ENCODE measurements at regions of chr10 and their contacts with region 1.

Region 1: DNA sequence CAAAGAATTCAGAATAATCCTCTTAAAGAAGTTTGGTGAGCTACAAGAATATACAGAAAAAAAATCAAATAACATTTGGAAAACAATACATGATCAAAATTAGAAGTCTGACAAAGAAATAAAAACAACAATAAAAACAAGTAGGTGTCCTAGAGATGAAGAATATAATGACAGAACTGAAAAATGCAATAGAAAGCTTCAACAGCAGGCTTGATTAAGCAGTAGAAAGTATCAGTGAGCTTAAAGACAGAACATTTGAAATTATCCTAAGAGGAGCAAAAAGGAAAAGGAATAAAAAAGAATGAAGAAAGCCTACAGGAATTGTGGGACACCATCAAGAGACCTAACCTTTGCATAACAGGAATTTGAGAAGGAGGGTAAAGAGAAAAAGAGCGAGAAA is 238.8 kb downstream of the ZEB1 start:
- DNase-seq: no peak
- H3K4me3 ChIP-seq: no peak overlapping the region
- H3K27ac ChIP-seq: no peak overlapping the region
- H3K4me1 ChIP-seq: no peaks in the 10 kb centered on the region
- H3K27me3 ChIP-seq: no peaks in the 10 kb centered on the region
- CTCF ChIP-seq: no peak
- EP300 ChIP-seq: no peak
- POLR2A ChIP-seq: no peak

Region 2: GRCh38 chr10:31515819-31516402 is 41.9 kb before region 1 on chr10:
- in situ Hi-C with region 1: no loop called
- intact Hi-C with region 1: loop called (anchors 2 kb)
- DNase-seq: no peak
- H3K4me3 ChIP-seq: no peak overlapping the region
- H3K27ac ChIP-seq: no peak overlapping the region
- H3K4me1 ChIP-seq: no peaks in the 10 kb centered on the region
- H3K27me3 ChIP-seq: no peaks in the 10 kb centered on the region
- CTCF ChIP-seq: no peak
- EP300 ChIP-seq: no peak
- POLR2A ChIP-seq: no peak

Region 3: GRCh38 chr10:33314811-33315561 is 1757.1 kb after region 1 on chr10:
- in situ Hi-C with region 1: no loop called
- intact Hi-C with region 1: no loop called
- DNase-seq: no peak
- H3K4me3 ChIP-seq: no peak overlapping the region
- H3K27ac ChIP-seq: peak overlapping the region in 1 of 4 donors; percentile 18
- H3K4me1 ChIP-seq: peaks cover 0 to 15% (median 2%) of the 10 kb centered on the region in 4 donors
- H3K27me3 ChIP-seq: no peaks in the 10 kb centered on the region
- CTCF ChIP-seq: no peak
- EP300 ChIP-seq: no peak
- POLR2A ChIP-seq: no peak